WTC11 (cell line): ENCODE measurements at regions of chr5 and their contacts with region 1.

Region 1: DNA sequence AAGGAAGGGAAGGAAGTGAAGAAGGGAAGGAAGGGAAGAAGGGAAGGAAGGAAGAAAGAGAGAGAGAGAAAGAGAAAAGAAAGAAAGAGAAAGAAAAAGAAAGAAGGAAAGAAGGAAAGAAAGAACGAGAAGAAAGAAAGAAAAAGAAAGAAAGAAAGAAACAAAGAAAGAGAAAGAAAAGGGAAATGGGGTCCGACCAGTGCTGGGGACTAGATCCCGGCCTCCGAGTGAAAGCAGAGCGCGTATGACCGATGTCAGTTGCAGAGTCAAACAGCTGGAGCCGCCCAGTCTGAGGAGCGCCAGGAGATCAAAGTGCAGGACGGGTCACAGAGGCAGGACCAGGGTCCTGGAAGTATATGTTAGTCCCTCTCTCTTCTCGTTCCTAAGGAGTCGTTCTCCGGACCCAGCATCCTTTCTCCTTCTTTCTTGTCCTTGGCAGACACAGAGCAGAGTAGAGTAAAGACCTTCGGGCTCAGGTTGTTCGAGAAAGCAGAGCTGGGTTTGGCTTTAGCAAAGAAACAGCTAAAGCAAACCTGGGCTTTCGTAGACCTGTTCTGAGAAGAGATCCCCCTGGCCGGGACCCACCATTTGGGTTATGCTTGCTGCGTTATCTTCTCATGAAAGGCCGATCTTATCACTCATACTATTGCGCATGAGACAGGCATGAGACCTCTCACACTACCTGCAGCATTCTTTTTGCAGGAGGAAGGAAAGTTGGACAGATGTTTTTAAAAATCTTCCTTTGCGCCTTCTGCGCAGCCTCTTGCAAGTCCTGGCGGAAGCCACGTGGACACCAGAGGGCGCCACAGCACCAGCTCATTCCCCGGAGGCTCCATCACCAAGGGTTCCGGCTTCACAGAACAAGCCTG is 305.2 kb upstream of the MSX2 start:
- DNase-seq: peak; percentile 96
- ATAC-seq: peak; percentile 93
- H3K4me3 Mint-ChIP-seq: peak overlapping the region; percentile 78
- H3K27ac Mint-ChIP-seq: no peak overlapping the region
- H3K4me1 Mint-ChIP-seq: peaks cover 7% of the 10 kb centered on the region
- H3K27me3 Mint-ChIP-seq: peaks cover 24% of the 10 kb centered on the region
- CTCF ChIP-seq: peak; percentile 88

Region 2: GRCh38 chr5:174344340-174344739 is 74.8 kb before region 1 on chr5:
- CTCF ChIA-PET with region 1: interaction called, 17 read pairs
- POLR2A ChIA-PET with region 1: no interaction called
- DNase-seq: no peak
- ATAC-seq: peak; percentile 85
- H3K4me3 Mint-ChIP-seq: no peak overlapping the region
- H3K27ac Mint-ChIP-seq: no peak overlapping the region
- H3K4me1 Mint-ChIP-seq: peaks cover 5% of the 10 kb centered on the region
- H3K27me3 Mint-ChIP-seq: no peaks in the 10 kb centered on the region; the same call in 1 of the 2 replicates
- CTCF ChIP-seq: no peak

Region 3: DNA sequence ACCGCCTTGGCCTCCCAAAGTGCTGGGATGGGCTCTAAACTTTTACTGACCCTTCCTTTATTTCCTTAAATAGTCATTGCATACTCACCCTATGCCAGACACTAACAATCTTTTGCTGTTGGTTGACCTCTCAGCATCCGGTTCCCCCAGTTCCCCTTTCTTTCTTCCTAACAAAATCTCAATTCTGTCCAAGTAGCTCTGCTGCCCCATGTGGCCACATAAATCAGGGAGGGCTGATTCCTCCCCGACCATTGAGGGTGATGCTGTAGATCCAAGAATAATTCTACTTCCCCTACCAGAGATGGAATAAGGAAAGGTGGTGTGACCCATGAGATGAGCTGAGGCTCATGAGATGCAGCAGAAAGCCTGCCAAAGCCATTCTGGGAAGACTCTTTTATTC is 10.1 kb before region 1 on chr5:
- CTCF ChIA-PET with region 1: interaction called, 30 read pairs
- POLR2A ChIA-PET with region 1: no interaction called
- DNase-seq: peak; percentile 25
- ATAC-seq: peak; percentile 59; the same call in 1 of the 2 replicates
- H3K4me3 Mint-ChIP-seq: no peak overlapping the region
- H3K27ac Mint-ChIP-seq: no peak overlapping the region
- H3K4me1 Mint-ChIP-seq: no peaks in the 10 kb centered on the region
- H3K27me3 Mint-ChIP-seq: no peaks in the 10 kb centered on the region
- CTCF ChIP-seq: no peak

Region 4: DNA sequence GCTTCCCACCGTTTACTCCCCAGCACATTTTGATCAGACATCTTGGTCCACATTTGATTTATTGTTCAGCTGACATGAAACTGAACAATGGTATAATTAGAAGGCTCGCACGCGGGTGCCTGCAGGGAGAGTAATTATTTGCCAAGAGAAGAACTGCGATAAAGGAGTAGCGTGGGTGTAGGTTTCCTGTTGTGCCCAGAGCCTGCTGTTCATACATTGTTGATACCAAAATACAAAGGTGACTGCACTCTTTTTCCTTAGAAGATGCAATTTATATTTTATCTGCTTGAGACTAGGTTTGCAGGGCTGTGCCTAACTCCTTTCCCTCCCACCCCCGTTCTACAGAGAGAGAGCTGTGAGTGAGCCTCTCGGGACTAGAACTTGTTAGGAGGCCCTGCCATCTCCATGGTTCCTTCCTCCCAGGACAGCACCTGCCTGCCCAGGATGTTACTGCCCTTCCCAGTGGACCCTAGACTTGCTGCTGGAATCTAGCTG is 63.5 kb after region 1 on chr5:
- CTCF ChIA-PET with region 1: no interaction called
- POLR2A ChIA-PET with region 1: no interaction called
- DNase-seq: no peak
- ATAC-seq: no peak
- H3K4me3 Mint-ChIP-seq: no peak overlapping the region
- H3K27ac Mint-ChIP-seq: no peak overlapping the region
- H3K4me1 Mint-ChIP-seq: no peaks in the 10 kb centered on the region
- H3K27me3 Mint-ChIP-seq: no peaks in the 10 kb centered on the region; the same call in 1 of the 2 replicates
- CTCF ChIP-seq: no peak

Region 5: DNA sequence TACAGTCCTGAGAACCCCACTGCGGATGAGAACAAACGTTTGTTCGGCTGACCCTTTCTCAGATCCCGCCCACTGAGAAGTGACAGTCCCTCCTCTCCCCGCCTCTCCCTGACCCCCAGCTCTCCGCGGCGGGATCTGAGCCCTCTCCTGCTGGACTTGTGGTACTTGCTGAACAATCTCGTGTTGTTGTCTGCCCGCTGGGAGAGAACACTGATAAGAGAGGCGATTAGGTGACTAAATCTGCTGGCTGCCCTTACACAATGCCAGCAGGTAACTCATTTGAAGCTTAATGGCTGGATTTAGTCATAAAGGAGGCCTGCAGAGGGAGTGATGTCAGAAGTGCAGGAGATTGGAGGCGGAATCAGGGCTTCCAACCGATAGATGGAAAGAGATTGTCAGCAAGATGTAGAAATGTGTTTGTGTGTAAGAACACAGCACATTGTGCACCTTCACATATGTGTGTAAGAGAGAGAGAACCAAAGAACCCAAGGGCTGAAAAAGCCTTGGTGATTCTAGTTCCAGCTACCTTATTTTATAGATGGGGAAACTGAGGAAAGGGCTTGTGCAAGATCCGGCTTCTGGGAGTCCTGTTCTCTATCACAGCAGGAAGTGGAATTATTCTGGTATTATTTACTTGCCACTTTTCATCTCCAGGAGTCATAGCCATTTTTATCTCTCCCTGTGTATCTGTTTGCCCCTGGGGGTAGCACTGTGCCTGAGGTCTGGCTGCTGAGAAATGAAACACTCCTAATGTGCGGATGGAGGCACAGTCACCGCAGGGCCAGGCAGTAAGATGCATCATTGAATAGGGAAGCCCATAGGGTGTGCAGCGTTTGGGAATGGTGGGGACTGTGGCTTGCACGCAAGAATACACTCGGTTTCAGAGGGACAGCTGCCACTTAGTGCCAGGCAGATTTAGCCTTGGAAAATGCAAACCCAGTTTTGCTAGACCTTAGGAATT is 101.5 kb after region 1 on chr5:
- CTCF ChIA-PET with region 1: interaction called, 10 read pairs
- POLR2A ChIA-PET with region 1: no interaction called
- DNase-seq: peak; percentile 57
- ATAC-seq: peak; percentile 85
- H3K4me3 Mint-ChIP-seq: peak overlapping the region; percentile 61
- H3K27ac Mint-ChIP-seq: no peak overlapping the region
- H3K4me1 Mint-ChIP-seq: peaks cover 18% of the 10 kb centered on the region
- H3K27me3 Mint-ChIP-seq: peaks cover 47% of the 10 kb centered on the region
- CTCF ChIP-seq: no peak

Region 6: GRCh38 chr5:174542471-174542870 is 123.3 kb after region 1 on chr5:
- CTCF ChIA-PET with region 1: no interaction called
- POLR2A ChIA-PET with region 1: no interaction called
- DNase-seq: no peak
- ATAC-seq: no peak
- H3K4me3 Mint-ChIP-seq: no peak overlapping the region
- H3K27ac Mint-ChIP-seq: no peak overlapping the region
- H3K4me1 Mint-ChIP-seq: no peaks in the 10 kb centered on the region
- H3K27me3 Mint-ChIP-seq: no peaks in the 10 kb centered on the region
- CTCF ChIP-seq: no peak

Region 7: DNA sequence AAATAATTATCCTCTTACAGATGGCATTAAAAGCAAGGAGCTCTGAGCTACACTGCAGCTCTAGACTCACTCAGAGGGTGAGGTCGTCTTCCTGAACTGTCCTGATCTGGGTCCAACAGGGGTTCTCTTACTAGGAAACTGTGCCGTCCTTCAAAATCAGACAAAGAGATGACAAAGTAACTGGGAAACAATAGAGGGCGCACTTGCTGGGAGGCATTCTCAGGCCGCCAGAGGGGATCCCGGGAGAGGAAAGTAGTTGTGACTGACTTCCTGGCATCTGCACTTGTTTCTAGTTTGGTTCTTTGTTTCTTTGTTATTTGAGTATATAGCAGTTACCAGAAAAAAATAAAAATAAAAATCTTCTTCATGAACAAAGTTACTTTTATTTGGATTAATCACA is 162.3 kb after region 1 on chr5:
- CTCF ChIA-PET with region 1: interaction called, 11 read pairs
- POLR2A ChIA-PET with region 1: no interaction called
- DNase-seq: peak; percentile 62
- ATAC-seq: peak; percentile 94
- H3K4me3 Mint-ChIP-seq: no peak overlapping the region
- H3K27ac Mint-ChIP-seq: no peak overlapping the region
- H3K4me1 Mint-ChIP-seq: no peaks in the 10 kb centered on the region
- H3K27me3 Mint-ChIP-seq: no peaks in the 10 kb centered on the region
- CTCF ChIP-seq: peak; percentile 41; the same call in 1 of the 2 replicates

Region 8: GRCh38 chr5:174735498-174736330 is 316.6 kb after region 1 on chr5:
- CTCF ChIA-PET with region 1: interaction called, 31 read pairs
- POLR2A ChIA-PET with region 1: no interaction called
- DNase-seq: peak; percentile 72
- ATAC-seq: peak; percentile 53
- H3K4me3 Mint-ChIP-seq: peak overlapping the region; percentile 74
- H3K27ac Mint-ChIP-seq: no peak overlapping the region
- H3K4me1 Mint-ChIP-seq: peaks cover 55% of the 10 kb centered on the region
- H3K27me3 Mint-ChIP-seq: peaks cover 84% of the 10 kb centered on the region
- CTCF ChIP-seq: 0 out of 2 replicates have a peak, but pooled peaks have one; percentile 32

Region 9: DNA sequence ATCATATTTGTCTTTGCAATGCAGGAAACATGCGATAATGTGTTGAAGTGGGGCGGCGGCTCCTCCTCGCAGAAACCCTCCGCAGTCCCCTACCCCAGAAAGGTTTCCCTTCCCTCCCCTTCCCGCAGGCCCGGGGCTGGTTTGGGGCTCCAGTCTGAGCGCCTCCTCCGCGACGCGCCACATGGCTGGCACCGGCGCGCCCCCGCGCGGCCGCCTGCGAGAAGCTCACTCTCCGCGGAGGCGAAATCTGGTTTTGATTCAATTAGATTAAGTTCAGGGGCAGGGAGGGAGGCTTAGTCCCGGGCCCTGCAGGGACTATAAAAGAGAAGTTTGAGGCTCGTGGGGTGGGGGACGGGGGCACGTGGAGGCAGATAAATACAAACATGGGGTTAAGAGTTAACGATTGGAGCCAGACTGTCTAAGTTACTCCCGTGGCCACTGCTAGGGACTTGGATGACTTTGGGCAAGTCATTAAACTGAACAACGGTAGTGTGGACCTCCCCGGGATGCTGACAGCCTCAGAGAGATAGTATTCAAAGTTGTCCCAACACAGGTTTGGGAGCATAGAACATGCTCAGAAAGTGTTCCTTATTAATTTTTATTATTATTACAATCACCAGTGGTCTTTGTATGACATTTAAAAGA is 374.6 kb after region 1 on chr5:
- CTCF ChIA-PET with region 1: interaction called, 40 read pairs
- POLR2A ChIA-PET with region 1: no interaction called
- DNase-seq: peak; percentile 86
- ATAC-seq: peak; percentile 96
- H3K4me3 Mint-ChIP-seq: peak overlapping the region; percentile 31; the same call in 1 of the 2 replicates
- H3K27ac Mint-ChIP-seq: no peak overlapping the region
- H3K4me1 Mint-ChIP-seq: peaks cover 15% of the 10 kb centered on the region
- H3K27me3 Mint-ChIP-seq: peaks cover 13% of the 10 kb centered on the region
- CTCF ChIP-seq: peak; percentile 84